ENCODE measurements at regions of chr10 and their contacts with region 1.

Region 1: DNA sequence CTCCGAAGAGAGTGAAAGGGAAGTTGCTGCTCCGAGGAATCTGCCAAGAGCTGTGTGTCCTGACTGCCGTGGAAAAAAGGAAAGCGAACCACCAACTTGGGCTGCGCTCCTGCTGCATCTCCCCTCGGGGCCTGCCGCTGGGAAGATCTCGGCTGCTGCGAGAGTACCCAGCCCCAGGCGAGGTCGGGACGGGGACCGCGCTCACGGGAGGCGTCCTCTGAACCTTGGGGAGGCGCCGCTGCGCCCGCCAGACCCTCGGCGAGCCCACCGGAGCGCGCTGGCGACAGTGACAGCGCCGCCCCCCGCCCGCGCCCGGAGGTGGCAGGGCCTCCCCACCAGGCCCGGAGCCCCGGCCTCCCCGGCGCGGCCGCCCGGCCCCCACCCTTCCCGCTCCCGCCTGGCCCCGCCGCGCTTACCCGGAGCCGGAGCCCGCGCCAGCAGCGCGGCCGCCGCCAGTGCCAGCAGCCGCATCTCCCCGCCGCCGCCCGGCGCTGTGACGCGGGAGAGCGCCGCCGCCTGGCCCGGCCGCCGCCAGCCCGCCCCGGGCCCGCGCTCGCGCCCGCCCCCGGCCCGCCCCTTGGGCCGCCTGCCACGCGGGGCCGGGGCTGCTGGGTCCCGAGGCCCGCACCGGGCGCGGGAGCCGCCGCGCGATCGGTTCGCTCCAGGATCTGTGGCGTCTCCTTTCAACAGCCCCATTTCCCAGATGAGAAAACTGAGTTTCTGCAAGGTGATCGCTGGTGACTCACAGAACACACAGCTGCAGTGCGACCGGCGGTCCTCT is at the start of gene VSTM4:
- DNase-seq: peak in 5 of 10 donors; percentile 27 to 71 (median 41)
- H3K4me3 ChIP-seq: peak within 1 kb of the TSS; percentile 49 to 83 (median 69)
- H3K27ac ChIP-seq: peak within 1 kb of the TSS in 54 of 59 donors; percentile 1 to 86 (median 72)
- H3K27me3 ChIP-seq: no peaks in the 10 kb centered on the region
- CTCF ChIP-seq: peak in 22 of 56 donors; percentile 7 to 45 (median 16)
- total RNA-seq, gene VSTM4: 7.3 to 17.4 (median 11.3) TPM

Region 2: GRCh38 chr10:49164559-49165188 is 49.5 kb after region 1 on chr10:
- intact Hi-C with region 1: loop called in 1 of 2 experiments (anchors 5 kb)
- DNase-seq: no peak
- H3K4me3 ChIP-seq: no peak overlapping the region
- H3K27ac ChIP-seq: peak overlapping the region in 4 of 59 donors; percentile 54 to 75 (median 68)
- H3K27me3 ChIP-seq: no peaks in the 10 kb centered on the region
- CTCF ChIP-seq: peak in 52 of 56 donors; percentile 23 to 69 (median 50)

Region 3: DNA sequence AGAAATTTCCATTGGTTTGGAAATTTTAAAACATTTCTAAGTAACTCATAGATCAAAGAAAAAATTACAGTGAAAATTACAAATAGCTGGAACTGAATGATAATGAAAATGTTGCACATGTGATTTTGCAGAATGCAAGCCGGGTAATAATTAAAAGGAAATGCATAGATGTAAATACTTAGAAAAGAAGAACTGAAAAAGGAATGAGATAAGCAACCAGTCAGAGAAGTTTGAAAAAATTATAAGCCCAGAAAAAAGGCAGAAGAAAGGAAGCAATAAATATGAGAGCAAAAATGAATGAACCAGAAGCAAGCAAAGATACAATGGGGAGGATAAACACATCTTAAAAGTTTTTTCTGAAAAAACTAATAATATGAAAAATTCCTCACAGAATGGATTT is 76.1 kb after region 1 on chr10:
- intact Hi-C with region 1: loop called in 1 of 2 experiments (anchors 2 kb)
- DNase-seq: no peak
- H3K4me3 ChIP-seq: no peak overlapping the region
- H3K27ac ChIP-seq: no peak overlapping the region
- H3K27me3 ChIP-seq: no peaks in the 10 kb centered on the region
- CTCF ChIP-seq: no peak

Measured in dorsolateral prefrontal cortex (tissue), 120 donors.